ENCODE measurements at regions of chr6 and their contacts with region 1.

Region 1: GRCh38 chr6:35240840-35241801 is 18.4 kb upstream of the ZNF76 start:
- DNase-seq: peak; percentile 84
- ATAC-seq: peak; percentile 95
- H3K4me3 Mint-ChIP-seq: no peak overlapping the region
- H3K27ac Mint-ChIP-seq: no peak overlapping the region
- H3K4me1 Mint-ChIP-seq: no peaks in the 10 kb centered on the region
- H3K27me3 Mint-ChIP-seq: no peaks in the 10 kb centered on the region
- CTCF ChIP-seq: peak; percentile 98

Region 2: DNA sequence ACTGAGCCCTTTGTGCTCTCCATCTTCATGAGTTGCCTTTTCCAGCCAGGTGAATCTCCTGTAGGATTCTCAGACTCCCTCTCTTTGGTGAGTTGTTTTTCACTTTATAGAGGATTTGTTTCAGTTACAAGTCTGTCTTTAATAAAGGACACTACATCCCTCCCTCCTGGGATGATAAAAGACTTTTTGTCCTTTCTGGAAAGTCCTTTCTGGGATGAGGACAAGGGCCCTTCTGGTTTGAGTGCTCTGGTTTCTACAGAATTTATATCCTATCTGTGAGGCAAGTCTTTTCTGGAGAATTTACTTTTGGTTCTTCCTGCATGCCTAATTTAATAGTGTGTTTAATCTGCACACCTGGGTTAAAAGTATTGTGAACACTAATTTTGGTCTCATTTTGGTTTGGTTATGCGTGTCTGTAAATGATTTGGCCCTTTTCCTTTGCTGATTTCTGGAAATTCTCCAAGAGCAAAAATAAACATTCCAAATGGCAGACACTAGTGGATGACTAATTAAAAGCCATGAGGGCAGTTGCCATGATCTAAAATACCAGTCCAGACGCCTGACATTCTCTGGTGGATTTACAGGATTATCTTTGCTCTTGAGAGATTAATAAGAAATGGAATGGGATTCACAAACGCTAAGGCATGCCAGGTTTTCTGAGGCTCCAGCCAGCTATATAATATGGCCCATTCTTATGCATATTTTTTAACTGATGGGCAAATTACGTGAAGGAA is 144.8 kb before region 1 on chr6:
- CTCF ChIA-PET with region 1: interaction called, 10 read pairs
- POLR2A ChIA-PET with region 1: no interaction called
- intact Hi-C with region 1: no loop called
- DNase-seq: no peak
- ATAC-seq: no peak
- H3K4me3 Mint-ChIP-seq: no peak overlapping the region
- H3K27ac Mint-ChIP-seq: no peak overlapping the region
- H3K4me1 Mint-ChIP-seq: no peaks in the 10 kb centered on the region
- H3K27me3 Mint-ChIP-seq: peaks cover 2% of the 10 kb centered on the region
- CTCF ChIP-seq: no peak

Region 3: DNA sequence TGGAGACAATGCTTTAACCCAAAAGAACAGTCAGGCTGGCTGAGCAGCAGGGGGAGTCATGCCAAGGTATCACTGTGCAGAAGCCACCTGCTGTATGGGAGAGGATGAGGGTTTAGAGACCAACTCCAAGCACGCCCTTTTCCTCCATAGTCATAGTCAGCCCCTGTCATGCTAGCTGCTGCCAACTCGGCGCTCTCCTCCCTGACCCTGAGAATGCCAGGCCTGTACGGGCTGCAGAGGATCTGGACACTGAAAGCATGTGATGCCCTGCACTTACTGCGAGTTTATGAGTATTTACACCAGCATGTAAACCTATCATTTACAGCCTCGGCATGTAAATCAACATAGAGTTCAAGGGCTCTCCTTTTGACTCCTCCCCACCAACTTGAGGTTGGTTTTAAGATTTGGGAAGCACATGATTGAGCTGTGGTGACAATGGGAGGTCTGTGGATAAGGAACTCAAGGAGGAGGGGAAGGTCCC is 39.0 kb before region 1 on chr6:
- CTCF ChIA-PET with region 1: interaction called, 77 read pairs
- POLR2A ChIA-PET with region 1: no interaction called
- intact Hi-C with region 1: no loop called
- DNase-seq: no peak
- ATAC-seq: no peak
- H3K4me3 Mint-ChIP-seq: no peak overlapping the region
- H3K27ac Mint-ChIP-seq: no peak overlapping the region
- H3K4me1 Mint-ChIP-seq: no peaks in the 10 kb centered on the region
- H3K27me3 Mint-ChIP-seq: peaks cover 35% of the 10 kb centered on the region
- CTCF ChIP-seq: no peak

Region 4: GRCh38 chr6:35230950-35231349 is 10.2 kb before region 1 on chr6:
- CTCF ChIA-PET with region 1: interaction called, 74 read pairs
- POLR2A ChIA-PET with region 1: interaction called, 4 read pairs
- intact Hi-C with region 1: no loop called
- DNase-seq: no peak
- ATAC-seq: no peak
- H3K4me3 Mint-ChIP-seq: no peak overlapping the region
- H3K27ac Mint-ChIP-seq: no peak overlapping the region
- H3K4me1 Mint-ChIP-seq: no peaks in the 10 kb centered on the region
- H3K27me3 Mint-ChIP-seq: no peaks in the 10 kb centered on the region
- CTCF ChIP-seq: no peak

Measured in activated CD8-positive, alpha-beta T cell treated with anti-CD3 and anti-CD28 coated beads for 36 hours (primary cell).